Motor neuron (in vitro differentiated cells): ENCODE measurements at regions of chr4 and their contacts with region 1.

Region 1: DNA sequence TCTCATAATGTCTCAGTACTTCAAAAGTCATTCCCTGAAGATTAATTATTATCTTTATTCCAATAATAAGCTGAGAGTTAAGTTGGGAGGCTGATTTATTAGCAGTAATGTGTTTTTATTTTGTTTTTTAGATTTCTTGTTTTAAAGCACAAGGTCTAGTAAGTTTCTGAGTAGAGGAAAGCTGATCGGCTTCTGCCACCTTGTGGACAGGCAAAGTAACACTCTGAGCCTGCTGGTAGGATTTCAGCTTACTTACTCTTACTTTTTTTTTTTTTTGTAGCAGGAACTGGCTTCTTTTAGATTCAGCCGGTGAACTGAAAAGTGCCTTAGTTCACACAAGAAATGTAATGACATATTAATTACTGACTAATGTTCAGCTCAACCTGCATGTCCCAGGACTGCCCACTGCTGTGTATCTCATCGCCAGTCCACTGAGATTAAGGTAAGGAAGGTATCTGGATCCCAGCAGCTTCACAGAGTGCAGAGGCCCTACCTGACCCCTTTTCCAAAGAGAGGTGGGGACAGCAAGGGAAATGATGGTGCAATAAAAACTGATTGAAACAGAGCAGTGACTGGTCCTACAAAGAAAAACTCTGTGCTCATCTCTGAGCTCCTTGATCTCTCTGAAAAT is 126.5 kb downstream of the ADGRA3 start:
- ATAC-seq: peak; percentile 65 to 88 (median 75)
- H3K4me3 ChIP-seq: no peak overlapping the region
- H3K27ac ChIP-seq: no peak overlapping the region
- H3K4me1 ChIP-seq: no peaks in the 10 kb centered on the region

Region 2: DNA sequence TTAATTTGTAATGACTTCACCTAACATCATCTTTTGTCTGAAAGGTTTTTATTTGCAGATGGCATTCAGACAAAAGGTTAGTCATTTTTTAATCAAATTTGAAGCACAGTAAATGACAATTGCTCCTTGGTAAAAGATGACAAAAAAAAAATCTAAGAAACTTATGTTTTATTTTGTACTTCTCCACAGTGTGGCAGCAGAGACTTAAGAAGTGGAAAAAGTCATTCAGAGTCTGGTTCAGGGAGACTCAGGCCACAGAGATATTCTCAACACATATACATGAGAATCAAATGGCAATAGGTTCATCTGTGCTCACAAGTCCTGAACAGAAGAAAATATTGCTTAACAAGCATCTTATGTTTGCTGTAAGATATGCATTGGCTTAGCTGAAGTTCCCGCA is 877.0 kb before region 1 on chr4:
- in situ Hi-C with region 1: loop called in 1 of 9 experiments (anchors 25 kb)
- ATAC-seq: peak; percentile 60 to 88 (median 72)
- H3K4me3 ChIP-seq: no peak overlapping the region
- H3K27ac ChIP-seq: no peak overlapping the region
- H3K4me1 ChIP-seq: peaks cover 0 to 3% of the 10 kb centered on the region in 2 donors

Region 3: DNA sequence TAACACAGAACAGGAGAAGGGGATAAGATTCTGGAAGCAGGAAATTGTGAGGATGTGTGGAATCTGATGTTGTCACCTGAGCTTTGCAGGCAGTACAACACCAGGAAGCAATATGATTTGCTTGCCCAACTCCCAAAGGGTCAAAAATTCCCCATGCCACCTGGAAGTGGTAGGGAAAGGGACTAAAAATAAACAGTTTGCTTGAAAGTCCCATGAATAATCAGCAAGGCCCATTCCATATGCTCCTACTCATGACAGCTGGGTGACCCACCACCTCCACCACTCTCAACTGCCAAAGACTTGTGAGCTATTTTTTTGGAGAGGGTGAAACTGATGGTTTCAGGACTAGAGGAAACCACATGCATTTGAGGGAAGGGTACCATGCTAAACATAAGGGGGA is 609.2 kb before region 1 on chr4:
- in situ Hi-C with region 1: loop called in 7 of 9 experiments (anchors 10 to 25 kb)
- ATAC-seq: no peak
- H3K4me3 ChIP-seq: no peak overlapping the region
- H3K27ac ChIP-seq: no peak overlapping the region
- H3K4me1 ChIP-seq: no peaks in the 10 kb centered on the region

Region 4: GRCh38 chr4:21790438-21791029 is 598.8 kb before region 1 on chr4:
- in situ Hi-C with region 1: loop called in 7 of 9 experiments (anchors 10 to 25 kb)
- ATAC-seq: peak in 5 of 8 experiments; percentile 31 to 58 (median 35)
- H3K4me3 ChIP-seq: no peak overlapping the region
- H3K27ac ChIP-seq: no peak overlapping the region
- H3K4me1 ChIP-seq: no peaks in the 10 kb centered on the region

Region 5: GRCh38 chr4:21802406-21802805 is 586.9 kb before region 1 on chr4:
- in situ Hi-C with region 1: loop called in 5 of 9 experiments (anchors 25 kb)
- ATAC-seq: no peak
- H3K4me3 ChIP-seq: no peak overlapping the region
- H3K27ac ChIP-seq: no peak overlapping the region
- H3K4me1 ChIP-seq: no peaks in the 10 kb centered on the region

Region 6: DNA sequence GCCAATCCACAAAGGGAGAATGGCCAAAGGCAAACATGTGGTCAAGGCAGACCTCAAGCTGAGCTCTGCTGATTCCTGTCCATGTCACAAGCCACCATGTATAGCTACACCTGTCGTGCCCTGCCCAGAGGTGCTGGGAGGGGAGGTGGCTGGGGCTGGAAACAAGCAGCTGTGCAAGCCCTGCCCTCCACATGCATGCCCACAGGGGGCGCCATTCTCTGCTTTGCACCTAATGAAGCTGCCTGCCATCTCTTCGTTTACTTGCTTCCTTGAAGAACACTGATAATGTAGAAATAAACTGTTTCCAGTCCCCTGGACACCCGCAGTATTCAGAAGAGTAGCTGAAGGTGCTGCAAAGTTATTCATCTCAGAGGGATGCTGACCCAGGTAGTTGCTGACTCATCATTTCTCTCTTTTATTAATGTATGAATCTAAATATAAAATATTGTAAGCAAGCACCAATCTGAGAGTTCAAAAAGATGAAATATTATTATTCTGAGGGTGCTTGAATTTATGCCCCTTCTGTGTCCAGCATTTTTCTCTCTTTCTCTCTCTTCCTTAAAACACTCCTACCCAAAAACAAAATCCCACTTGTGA is 152.1 kb before region 1 on chr4:
- in situ Hi-C with region 1: no loop called
- ATAC-seq: peak in 2 of 8 experiments; percentile 22 to 26
- H3K4me3 ChIP-seq: no peak overlapping the region
- H3K27ac ChIP-seq: no peak overlapping the region
- H3K4me1 ChIP-seq: peaks cover 19 to 37% of the 10 kb centered on the region in 2 donors